Activated CD4-positive, alpha-beta T cell treated with anti-CD3 and anti-CD28 coated beads, Interleukin-2, amount 10 ng/mL, durations not matched to agents 24 days and 14 days (primary cell): ENCODE measurements at regions of chr12 and their contacts with region 1.

Region 1: GRCh38 chr12:98698603-98699463 is 53.7 kb downstream of the APAF1 start:
- DNase-seq: peak; percentile 83
- H3K4me3 Mint-ChIP-seq: no peak overlapping the region
- H3K27ac Mint-ChIP-seq: peak overlapping the region; percentile 25
- H3K4me1 Mint-ChIP-seq: peaks cover 10% of the 10 kb centered on the region
- H3K27me3 Mint-ChIP-seq: no peaks in the 10 kb centered on the region

Region 2: DNA sequence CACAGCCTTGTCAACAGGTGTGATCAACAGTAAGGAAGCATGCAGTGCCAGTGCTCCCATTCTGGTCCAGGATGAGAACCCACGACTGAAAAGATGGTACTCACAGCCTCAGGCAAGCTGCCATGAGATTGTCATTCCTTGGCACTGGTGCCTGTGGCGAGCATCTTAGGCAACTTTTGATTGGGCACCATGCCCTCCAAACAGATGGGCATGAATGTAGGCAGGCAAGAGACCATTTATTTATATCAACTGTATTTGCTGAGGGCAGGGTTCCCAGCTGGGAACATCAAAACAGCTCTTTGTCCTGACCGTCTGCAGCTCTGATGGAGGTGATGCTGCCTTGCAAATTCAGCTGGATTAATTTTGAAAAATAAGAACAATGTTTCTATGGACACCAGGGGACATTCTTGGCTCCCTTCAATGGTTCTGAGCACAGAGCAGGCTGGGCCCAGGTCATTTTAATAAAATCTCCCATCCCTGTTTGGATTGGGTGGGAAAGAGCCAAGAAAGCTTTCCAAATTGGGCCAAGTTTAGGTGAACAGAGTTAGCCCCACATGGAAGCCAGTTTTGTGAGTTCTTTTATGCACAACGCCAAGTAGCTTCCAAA is 713.8 kb before region 1 on chr12:
- intact Hi-C with region 1: no loop called
- DNase-seq: no peak
- H3K4me3 Mint-ChIP-seq: no peak overlapping the region
- H3K27ac Mint-ChIP-seq: no peak overlapping the region
- H3K4me1 Mint-ChIP-seq: no peaks in the 10 kb centered on the region
- H3K27me3 Mint-ChIP-seq: no peaks in the 10 kb centered on the region

Region 3: GRCh38 chr12:98939350-98939749 is 240.5 kb after region 1 on chr12:
- intact Hi-C with region 1: loop called (anchors 5 kb)
- DNase-seq: no peak
- H3K4me3 Mint-ChIP-seq: no peak overlapping the region
- H3K27ac Mint-ChIP-seq: no peak overlapping the region
- H3K4me1 Mint-ChIP-seq: no peaks in the 10 kb centered on the region
- H3K27me3 Mint-ChIP-seq: peaks cover 20% of the 10 kb centered on the region